H1 (cell line): ENCODE measurements at regions of chr1 and their contacts with region 1.

Region 1: DNA sequence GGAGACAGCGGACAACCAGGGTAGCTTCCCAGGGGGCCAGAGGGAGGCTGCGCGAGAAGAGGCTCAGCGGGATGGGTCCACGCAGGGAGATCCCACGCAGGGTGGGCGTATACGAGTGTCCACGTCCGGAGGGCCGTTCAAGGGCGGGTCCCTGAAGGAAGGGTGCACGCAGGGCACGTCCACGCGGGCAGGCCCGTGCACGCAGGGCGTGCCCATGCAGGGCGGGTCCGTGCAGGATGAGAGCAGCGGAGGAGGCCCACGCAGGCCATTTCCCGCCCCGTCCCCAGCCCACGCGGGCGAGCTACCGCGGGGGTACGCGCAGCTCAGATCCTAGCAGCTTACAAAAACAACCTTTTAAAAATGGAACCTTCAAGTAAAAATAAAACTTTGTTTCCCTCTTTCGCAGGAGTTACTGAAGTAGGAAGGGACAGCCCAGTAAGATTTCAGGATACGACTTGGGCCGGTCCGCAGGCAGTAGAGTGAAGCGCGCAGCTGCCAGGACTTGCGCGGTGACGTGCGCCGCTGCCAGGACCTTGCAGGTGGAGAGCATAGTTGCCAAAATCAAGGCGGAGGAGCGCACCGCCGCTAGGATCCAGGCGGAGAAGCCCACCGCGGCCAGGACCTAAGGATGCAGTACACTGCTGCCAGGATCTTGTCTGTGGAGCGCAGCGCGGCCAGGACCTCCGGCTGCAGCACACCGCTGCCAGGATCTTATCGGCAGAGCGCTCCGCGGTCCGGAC is 416 bp upstream of the RNF187 start:
- DNase-seq: peak in 1 of 2 experiments; percentile 90
- H3K4me3 ChIP-seq: peak overlapping the region; percentile 76 to 87 (median 85)
- H3K27ac ChIP-seq: peak overlapping the region; percentile 99
- H3K4me1 ChIP-seq: peaks cover 0 to 10% (median 6%) of the 10 kb centered on the region in 4 experiments; a peak in 6 of 7 replicates
- H3K27me3 ChIP-seq: no peaks in the 10 kb centered on the region
- CTCF ChIP-seq: no peak
- EP300 ChIP-seq: no peak
- POLR2A ChIP-seq: no peak
- RAD21 ChIP-seq: no peak

Region 2: GRCh38 chr1:228471762-228472398 is 14.9 kb before region 1 on chr1:
- CTCF ChIA-PET with region 1: interaction called, 26 read pairs
- POLR2A ChIA-PET with region 1: interaction called, 6 read pairs
- DNase-seq: no peak
- H3K4me3 ChIP-seq: no peak overlapping the region
- H3K27ac ChIP-seq: no peak overlapping the region
- H3K4me1 ChIP-seq: peaks cover 3 to 22% (median 15%) of the 10 kb centered on the region in 4 experiments; a peak in 6 of 7 replicates
- H3K27me3 ChIP-seq: peaks cover 2 to 28% (median 15%) of the 10 kb centered on the region in 4 experiments
- CTCF ChIP-seq: peak in 2 of 3 experiments; percentile 64 to 68; a peak in 3 of 4 replicates
- EP300 ChIP-seq: no peak
- POLR2A ChIP-seq: no peak
- RAD21 ChIP-seq: peak; percentile 50 to 70

Region 3: DNA sequence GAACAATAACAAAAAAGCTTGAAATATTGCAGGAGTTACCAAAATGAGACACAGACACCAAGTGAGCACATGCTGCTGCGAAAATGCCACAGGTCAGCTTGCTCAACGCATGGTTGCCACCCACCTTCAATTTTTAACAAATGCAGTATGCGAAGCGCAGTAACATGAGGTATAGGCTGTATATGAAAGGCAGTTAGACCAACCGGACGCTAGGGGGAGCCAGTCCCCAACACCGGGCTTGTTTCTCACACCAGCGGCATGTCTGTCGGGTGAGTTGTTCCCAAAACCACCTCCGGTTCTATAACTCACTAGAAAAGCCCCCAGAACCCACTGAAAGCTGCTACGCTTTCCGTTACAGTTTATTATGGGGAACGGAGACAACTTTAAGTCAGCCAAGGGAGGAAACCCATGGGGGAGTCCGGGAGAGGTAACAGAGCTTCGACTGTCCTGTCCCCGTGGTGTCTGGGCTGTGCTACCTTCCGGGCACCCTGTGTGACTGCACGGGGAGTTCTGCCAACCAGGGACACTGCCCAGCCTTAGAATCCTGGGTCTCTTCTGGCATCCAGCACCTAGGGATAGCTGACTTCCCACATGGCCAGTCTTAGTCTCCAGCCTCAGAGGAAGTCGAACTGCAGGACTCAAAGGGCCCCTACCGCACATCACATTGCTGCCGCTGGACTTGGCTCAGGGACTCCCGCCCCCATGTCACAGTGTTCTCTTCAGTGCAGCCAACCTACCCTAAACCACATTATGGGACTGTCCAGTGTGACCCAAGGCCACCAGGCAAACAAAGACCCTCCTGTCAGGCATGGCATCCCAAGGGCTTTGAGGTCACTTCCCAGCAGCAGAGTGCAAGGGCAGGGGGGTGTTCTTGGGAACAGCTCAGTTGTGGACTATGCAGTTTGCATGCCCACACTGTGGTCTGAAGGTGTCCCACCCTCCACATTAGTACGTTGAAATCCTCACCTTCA is 14.4 kb after region 1 on chr1:
- CTCF ChIA-PET with region 1: interaction called, 13 read pairs
- POLR2A ChIA-PET with region 1: interaction called, 12 read pairs
- DNase-seq: peak; percentile 61 to 92
- H3K4me3 ChIP-seq: peak overlapping the region in 1 of 4 experiments; percentile 17; a peak in 1 of 8 replicates
- H3K27ac ChIP-seq: no peak overlapping the region
- H3K4me1 ChIP-seq: peaks cover 0 to 4% (median 2%) of the 10 kb centered on the region in 4 experiments; a peak in 4 of 7 replicates
- H3K27me3 ChIP-seq: peaks cover 0 to 24% (median 18%) of the 10 kb centered on the region in 4 experiments; a peak in 6 of 7 replicates
- CTCF ChIP-seq: peak; percentile 84 to 95 (median 89)
- EP300 ChIP-seq: no peak
- POLR2A ChIP-seq: no peak
- RAD21 ChIP-seq: peak; percentile 82

Region 4: GRCh38 chr1:228555074-228555989 is 68.6 kb after region 1 on chr1:
- CTCF ChIA-PET with region 1: no interaction called
- POLR2A ChIA-PET with region 1: no interaction called
- DNase-seq: peak in 1 of 2 experiments; percentile 49
- H3K4me3 ChIP-seq: no peak overlapping the region
- H3K27ac ChIP-seq: no peak overlapping the region
- H3K4me1 ChIP-seq: no peaks in the 10 kb centered on the region
- H3K27me3 ChIP-seq: peaks cover 12 to 37% (median 20%) of the 10 kb centered on the region in 4 experiments
- CTCF ChIP-seq: no peak
- EP300 ChIP-seq: no peak
- POLR2A ChIP-seq: no peak
- RAD21 ChIP-seq: no peak